ENCODE measurements at regions of chr17 and their contacts with region 1.

Region 1: DNA sequence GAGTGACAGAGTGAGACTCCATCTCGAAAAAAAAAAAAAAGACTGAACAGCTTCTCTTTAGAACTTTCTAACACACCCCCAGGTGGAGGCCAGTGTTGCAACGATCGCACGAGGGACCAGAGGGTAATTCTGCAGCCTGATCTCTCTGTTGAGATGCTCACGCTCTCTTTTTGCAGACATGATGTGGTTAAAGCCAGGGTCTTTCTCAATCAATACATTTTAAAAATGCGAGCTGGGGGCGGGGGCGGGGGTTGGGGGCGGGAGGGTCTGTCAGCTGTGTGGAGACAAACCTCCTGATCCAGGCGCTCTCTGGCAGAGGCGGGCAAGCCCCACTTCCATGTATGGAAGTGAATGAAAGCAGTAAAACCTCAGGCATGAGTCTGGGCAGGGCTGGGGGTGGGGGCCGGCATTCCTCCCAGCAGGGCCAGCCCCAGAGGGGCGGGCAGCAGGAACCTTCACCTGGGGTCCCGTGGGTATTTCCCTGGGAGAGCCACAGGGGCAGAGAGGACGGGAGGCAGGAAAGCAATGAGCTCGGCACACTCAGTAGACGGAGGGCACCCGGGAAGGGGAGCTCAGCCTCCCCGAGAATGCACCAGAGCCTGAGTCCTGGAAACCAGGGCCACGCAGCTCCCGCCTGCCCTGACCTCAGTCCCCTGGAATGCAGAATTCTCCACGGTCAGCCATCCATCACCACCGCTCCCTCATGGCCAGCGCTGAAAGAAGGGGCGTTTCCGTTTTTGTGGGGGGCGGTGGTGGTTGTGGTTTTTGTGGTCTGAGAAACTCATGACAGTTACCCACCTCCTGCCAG is 28.0 kb downstream of the NXN start:
- DNase-seq: peak; percentile 65
- H3K4me3 ChIP-seq: no peak overlapping the region
- H3K27ac ChIP-seq: peak overlapping the region; percentile 54
- H3K4me1 ChIP-seq: peaks cover 29% of the 10 kb centered on the region
- H3K27me3 ChIP-seq: no peaks in the 10 kb centered on the region
- CTCF ChIP-seq: no peak

Region 2: GRCh38 chr17:801660-802059 is 149.9 kb before region 1 on chr17:
- CTCF ChIA-PET with region 1: no interaction called
- dilution Hi-C with region 1: no loop called
- in situ Hi-C with region 1: no loop called
- intact Hi-C with region 1: no loop called
- DNase-seq: no peak
- H3K4me3 ChIP-seq: no peak overlapping the region
- H3K27ac ChIP-seq: no peak overlapping the region
- H3K4me1 ChIP-seq: no peaks in the 10 kb centered on the region
- H3K27me3 ChIP-seq: no peaks in the 10 kb centered on the region
- CTCF ChIP-seq: no peak

Region 3: DNA sequence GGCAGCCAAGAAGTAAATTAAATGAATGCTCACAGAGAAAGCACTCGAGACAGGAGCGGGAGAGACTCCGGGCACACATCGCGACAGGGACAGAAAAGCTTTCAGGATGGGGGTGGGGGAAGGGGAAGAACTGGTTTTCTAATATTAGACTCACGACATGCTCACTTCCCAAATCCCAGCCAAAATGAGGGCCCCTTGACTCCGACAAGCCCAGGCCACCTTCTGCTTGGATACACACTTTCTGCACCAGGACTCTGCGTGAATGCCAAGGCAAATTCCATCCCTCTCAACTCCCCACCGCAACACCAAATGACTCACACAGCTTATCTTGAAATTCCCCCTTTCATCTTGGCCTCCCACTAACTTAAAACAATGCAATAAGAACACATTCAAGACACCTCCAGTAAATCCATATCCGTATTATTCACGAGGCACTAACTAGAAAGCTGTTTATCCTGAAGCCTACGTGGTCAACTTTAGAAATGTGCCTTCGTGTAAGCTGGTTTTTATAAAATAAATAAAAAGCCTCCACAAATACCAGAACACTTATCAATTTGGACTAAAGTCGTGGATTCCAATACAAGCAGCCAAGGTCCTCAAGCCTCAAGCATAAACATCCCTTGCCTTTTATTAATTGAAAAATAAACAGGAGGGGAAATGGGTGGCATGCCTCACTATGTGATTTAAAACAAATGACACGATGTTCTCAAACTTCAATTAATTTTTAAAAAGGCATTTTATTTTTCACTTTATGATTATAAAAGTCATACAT is 18.0 kb before region 1 on chr17:
- CTCF ChIA-PET with region 1: no interaction called
- dilution Hi-C with region 1: no loop called
- in situ Hi-C with region 1: no loop called
- intact Hi-C with region 1: loop called (anchors 2 kb)
- DNase-seq: peak; percentile 91
- H3K4me3 ChIP-seq: no peak overlapping the region
- H3K27ac ChIP-seq: peak overlapping the region; percentile 74
- H3K4me1 ChIP-seq: peaks cover 52% of the 10 kb centered on the region
- H3K27me3 ChIP-seq: no peaks in the 10 kb centered on the region
- CTCF ChIP-seq: no peak